ENCODE measurements at regions of chr6 and their contacts with region 1.

Region 1: DNA sequence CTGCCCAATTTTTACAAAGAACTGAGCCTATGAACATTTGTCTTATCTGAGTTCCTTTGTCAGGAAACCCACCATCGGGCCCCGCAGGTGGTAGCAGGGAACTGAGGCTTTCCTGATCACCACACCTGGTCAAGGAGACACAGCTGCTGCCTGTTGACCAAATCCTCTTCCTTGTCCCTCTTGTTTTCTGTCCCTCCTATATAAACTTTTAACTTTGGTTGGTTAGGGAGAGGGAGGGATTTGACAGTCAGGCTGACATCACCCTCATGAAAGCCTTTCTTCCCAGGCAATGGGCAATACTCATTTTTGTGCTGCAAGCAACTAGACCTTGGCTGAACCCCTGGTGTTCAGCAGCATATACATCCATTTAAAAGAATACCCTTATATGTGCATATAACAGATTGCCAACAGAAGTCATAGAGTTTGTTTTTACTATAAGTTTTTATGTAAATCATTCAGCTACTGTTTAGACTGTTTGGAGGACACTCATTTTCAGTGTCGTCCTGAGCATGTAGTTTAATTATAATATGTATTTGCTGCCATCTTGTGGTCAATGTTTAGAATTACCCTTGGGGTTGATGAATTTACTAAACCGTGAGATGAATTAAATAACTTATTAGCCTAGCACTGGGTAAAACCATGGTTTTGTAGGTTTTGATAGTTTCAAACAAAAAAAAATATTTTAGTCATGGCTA is 17.0 kb downstream of the CRISP1 start:
- DNase-seq: peak in 6 of 9 donors; percentile 1 to 30 (median 14)
- ATAC-seq: peak; percentile 58
- H3K4me3 ChIP-seq: no peak overlapping the region
- H3K4me3 Mint-ChIP-seq: no peak overlapping the region
- H3K27ac ChIP-seq: no peak overlapping the region
- H3K27ac Mint-ChIP-seq: no peak overlapping the region
- H3K4me1 ChIP-seq: no peaks in the 10 kb centered on the region
- H3K4me1 Mint-ChIP-seq: no peaks in the 10 kb centered on the region
- H3K27me3 ChIP-seq: no peaks in the 10 kb centered on the region
- H3K27me3 Mint-ChIP-seq: peaks cover 0 to 8% (median 0%) of the 10 kb centered on the region in 5 donors

Region 2: GRCh38 chr6:49531774-49532569 is 317.4 kb before region 1 on chr6:
- CTCF ChIA-PET with region 1: no interaction called
- POLR2A ChIA-PET with region 1: no interaction called
- intact Hi-C with region 1: loop called in 1 of 2 experiments (anchors 1 kb)
- DNase-seq: peak in 6 of 9 donors; percentile 7 to 28 (median 20)
- ATAC-seq: peak; percentile 81
- H3K4me3 ChIP-seq: no peak overlapping the region
- H3K4me3 Mint-ChIP-seq: peak overlapping the region in 3 of 10 donors; percentile 16 to 32 (median 27)
- H3K27ac ChIP-seq: no peak overlapping the region
- H3K27ac Mint-ChIP-seq: no peak overlapping the region
- H3K4me1 ChIP-seq: no peaks in the 10 kb centered on the region
- H3K4me1 Mint-ChIP-seq: peaks cover 0 to 5% (median 0%) of the 10 kb centered on the region in 7 donors
- H3K27me3 ChIP-seq: no peaks in the 10 kb centered on the region
- H3K27me3 Mint-ChIP-seq: peaks cover 20 to 23% (median 22%) of the 10 kb centered on the region in 5 donors

Region 3: GRCh38 chr6:49625140-49625539 is 224.2 kb before region 1 on chr6:
- CTCF ChIA-PET with region 1: no interaction called
- POLR2A ChIA-PET with region 1: no interaction called
- intact Hi-C with region 1: loop called (anchors 2 kb)
- DNase-seq: no peak
- ATAC-seq: no peak
- H3K4me3 ChIP-seq: no peak overlapping the region
- H3K4me3 Mint-ChIP-seq: no peak overlapping the region
- H3K27ac ChIP-seq: no peak overlapping the region
- H3K27ac Mint-ChIP-seq: no peak overlapping the region
- H3K4me1 ChIP-seq: no peaks in the 10 kb centered on the region
- H3K4me1 Mint-ChIP-seq: no peaks in the 10 kb centered on the region
- H3K27me3 ChIP-seq: no peaks in the 10 kb centered on the region
- H3K27me3 Mint-ChIP-seq: peaks cover 0 to 4% (median 0%) of the 10 kb centered on the region in 5 donors

Region 4: DNA sequence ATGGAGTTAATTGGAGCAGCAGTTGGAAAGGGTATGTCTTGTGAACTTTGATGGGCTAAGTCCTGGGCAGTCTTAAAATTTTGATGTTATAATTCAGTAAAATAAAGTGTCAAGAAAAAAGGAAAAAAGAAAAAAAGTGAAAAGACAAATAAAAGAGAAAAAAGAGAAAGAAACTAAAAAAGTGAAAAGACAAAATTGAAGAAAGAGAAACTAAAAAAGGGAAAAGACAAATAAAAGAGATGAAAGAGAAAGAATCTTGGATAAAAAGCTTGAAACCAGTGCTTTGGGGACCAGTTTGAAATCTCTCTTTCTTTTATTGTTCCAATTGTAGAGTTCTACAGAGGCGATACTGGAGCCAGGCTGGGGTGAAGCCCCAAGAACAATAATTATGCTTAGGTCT is 50.3 kb before region 1 on chr6:
- CTCF ChIA-PET with region 1: no interaction called
- POLR2A ChIA-PET with region 1: no interaction called
- intact Hi-C with region 1: no loop called
- DNase-seq: no peak
- ATAC-seq: no peak
- H3K4me3 ChIP-seq: no peak overlapping the region
- H3K4me3 Mint-ChIP-seq: no peak overlapping the region
- H3K27ac ChIP-seq: no peak overlapping the region
- H3K27ac Mint-ChIP-seq: no peak overlapping the region
- H3K4me1 ChIP-seq: no peaks in the 10 kb centered on the region
- H3K4me1 Mint-ChIP-seq: no peaks in the 10 kb centered on the region
- H3K27me3 ChIP-seq: no peaks in the 10 kb centered on the region
- H3K27me3 Mint-ChIP-seq: no peaks in the 10 kb centered on the region

Region 5: DNA sequence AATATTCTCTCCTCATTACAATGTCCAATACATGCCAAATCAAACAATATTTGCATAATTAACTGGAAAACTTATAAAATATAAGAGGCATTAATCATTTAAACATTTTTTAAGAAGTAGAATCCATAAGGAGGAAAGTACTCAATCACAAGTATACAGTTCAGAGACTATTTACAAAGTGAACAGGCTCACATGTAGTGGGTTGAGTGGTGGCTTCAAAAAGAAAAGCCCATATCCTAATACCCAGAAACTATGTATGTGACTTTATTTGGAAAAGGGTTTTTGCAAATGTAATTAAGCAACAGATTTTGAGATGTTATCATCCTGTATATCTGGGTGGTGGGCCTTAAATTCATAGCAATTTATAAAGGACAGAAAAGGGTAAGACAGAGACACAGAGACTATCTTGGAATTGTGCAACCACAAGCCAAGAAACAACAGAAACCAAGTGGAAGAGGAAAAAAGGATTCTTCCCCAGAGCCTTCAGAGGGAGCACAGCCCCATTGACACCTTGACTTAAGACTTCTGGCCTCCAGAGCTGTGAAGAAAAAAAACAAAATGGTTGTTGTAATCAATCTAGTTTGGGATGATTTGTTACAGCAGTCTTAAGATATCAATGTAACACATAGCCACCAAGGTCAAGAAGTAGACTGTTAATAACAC is 49.7 kb after region 1 on chr6:
- CTCF ChIA-PET with region 1: no interaction called
- POLR2A ChIA-PET with region 1: no interaction called
- intact Hi-C with region 1: no loop called
- DNase-seq: no peak
- ATAC-seq: no peak
- H3K4me3 ChIP-seq: no peak overlapping the region
- H3K4me3 Mint-ChIP-seq: no peak overlapping the region
- H3K27ac ChIP-seq: no peak overlapping the region
- H3K27ac Mint-ChIP-seq: no peak overlapping the region
- H3K4me1 ChIP-seq: no peaks in the 10 kb centered on the region
- H3K4me1 Mint-ChIP-seq: no peaks in the 10 kb centered on the region
- H3K27me3 ChIP-seq: no peaks in the 10 kb centered on the region
- H3K27me3 Mint-ChIP-seq: no peaks in the 10 kb centered on the region